ENCODE measurements at regions of chr21 and their contacts with region 1.

Region 1: GRCh38 chr21:33324291-33325221 is at the start of gene IFNAR1:
- DNase-seq: peak; percentile 98 to 100 (median 99)
- ATAC-seq: peak; percentile 87
- H3K4me3 ChIP-seq: peak within 1 kb of the TSS; percentile 90
- H3K4me3 Mint-ChIP-seq: no peak within 1 kb of the TSS
- H3K27ac ChIP-seq: peak within 1 kb of the TSS; percentile 95 to 99
- H3K27ac Mint-ChIP-seq: no peak within 1 kb of the TSS
- H3K4me1 ChIP-seq: peaks cover 29% of the 10 kb centered on the region
- H3K4me1 Mint-ChIP-seq: peaks cover 31% of the 10 kb centered on the region
- H3K27me3 ChIP-seq: no peaks in the 10 kb centered on the region
- H3K27me3 Mint-ChIP-seq: no peaks in the 10 kb centered on the region
- CTCF ChIP-seq: no peak
- total RNA-seq, gene IFNAR1: 20.4 to 26.8 TPM

Region 2: GRCh38 chr21:33185852-33186251 is 138.7 kb before region 1 on chr21:
- CTCF ChIA-PET with region 1: no interaction called
- POLR2A ChIA-PET with region 1: interaction called, 11 read pairs
- intact Hi-C with region 1: no loop called
- DNase-seq: peak in 6 of 14 experiments; percentile 17 to 83 (median 57)
- ATAC-seq: peak; percentile 94
- H3K4me3 ChIP-seq: no peak overlapping the region
- H3K4me3 Mint-ChIP-seq: peak overlapping the region; percentile 49
- H3K27ac ChIP-seq: peak overlapping the region; percentile 45 to 73
- H3K27ac Mint-ChIP-seq: peak overlapping the region; percentile 76
- H3K4me1 ChIP-seq: peaks cover 20% of the 10 kb centered on the region
- H3K4me1 Mint-ChIP-seq: peaks cover 68% of the 10 kb centered on the region
- H3K27me3 ChIP-seq: no peaks in the 10 kb centered on the region
- H3K27me3 Mint-ChIP-seq: no peaks in the 10 kb centered on the region
- CTCF ChIP-seq: no peak

Region 3: DNA sequence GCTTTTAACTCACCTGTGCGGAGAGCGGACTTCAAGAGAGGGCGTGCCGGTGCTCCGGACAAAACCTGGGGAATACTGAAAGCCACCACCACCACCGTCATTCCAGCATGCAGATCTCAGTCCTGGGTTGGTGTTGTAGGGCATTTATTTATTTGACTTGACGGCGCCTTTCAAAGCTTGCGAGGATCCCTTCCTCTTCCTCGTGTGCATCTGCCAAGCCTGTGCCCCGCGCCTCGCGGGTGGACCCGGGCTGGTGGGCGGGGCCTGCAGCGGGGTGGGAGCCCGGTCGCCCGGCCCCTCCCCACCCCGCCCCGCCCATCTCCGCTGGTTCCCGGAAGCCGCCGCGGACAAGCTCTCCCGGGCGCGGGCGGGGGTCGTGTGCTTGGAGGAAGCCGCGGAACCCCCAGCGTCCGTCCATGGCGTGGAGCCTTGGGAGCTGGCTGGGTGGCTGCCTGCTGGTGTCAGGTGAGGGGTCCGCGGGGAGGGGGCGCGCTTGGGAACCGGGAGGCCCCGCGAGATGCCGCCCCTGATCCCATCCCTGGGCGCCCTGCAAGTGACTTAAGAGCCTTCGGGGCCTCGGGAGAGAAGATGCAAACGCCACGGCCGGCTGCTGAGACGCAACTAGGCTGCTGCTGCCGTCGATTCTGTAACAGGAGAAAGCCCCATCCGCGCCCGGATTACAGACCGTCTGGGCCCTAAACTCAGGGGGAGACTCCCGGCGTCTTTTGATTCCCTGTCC is 58.3 kb before region 1 on chr21 and contains the start of gene IL10RB:
- CTCF ChIA-PET with region 1: interaction called, 3 read pairs
- POLR2A ChIA-PET with region 1: interaction called, 35 read pairs
- intact Hi-C with region 1: no loop called
- DNase-seq: peak; percentile 47 to 89 (median 72)
- ATAC-seq: peak; percentile 71
- H3K4me3 ChIP-seq: peak within 1 kb of the TSS; percentile 98
- H3K4me3 Mint-ChIP-seq: peak within 1 kb of the TSS; percentile 99
- H3K27ac ChIP-seq: peak within 1 kb of the TSS; percentile 79 to 85
- H3K27ac Mint-ChIP-seq: peak within 1 kb of the TSS; percentile 94
- H3K4me1 ChIP-seq: peaks cover 62% of the 10 kb centered on the region
- H3K4me1 Mint-ChIP-seq: peaks cover 60% of the 10 kb centered on the region
- H3K27me3 ChIP-seq: no peaks in the 10 kb centered on the region
- H3K27me3 Mint-ChIP-seq: no peaks in the 10 kb centered on the region
- CTCF ChIP-seq: no peak
- total RNA-seq, gene IL10RB: 7.2 to 9.2 TPM

Region 4: DNA sequence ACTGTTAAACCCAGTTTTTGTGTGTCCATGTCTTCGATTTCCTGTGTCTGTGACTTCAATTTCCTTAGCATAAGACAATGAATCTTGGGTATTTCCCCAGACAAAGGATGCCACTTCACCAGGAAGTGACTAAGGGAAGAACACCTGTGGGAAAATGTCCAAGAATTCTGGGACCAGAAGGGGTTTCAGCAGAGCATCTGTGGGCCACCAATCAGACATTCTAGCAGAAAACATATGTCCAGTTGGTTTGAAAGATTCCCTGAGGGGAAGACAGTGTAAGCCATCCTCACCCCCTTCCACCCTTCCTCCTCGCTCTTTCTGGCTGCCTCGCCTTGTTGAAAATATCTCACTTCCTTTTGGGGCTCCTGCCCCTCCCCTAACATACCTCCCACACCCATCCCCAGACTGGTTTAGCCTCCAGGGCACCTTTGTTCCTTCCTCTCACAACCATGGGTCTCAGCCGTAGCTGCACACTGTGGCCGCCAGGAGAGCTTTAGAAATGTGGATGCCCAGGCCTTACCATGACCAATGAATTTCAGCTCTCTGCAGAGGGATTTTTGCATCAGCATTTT is 25.3 kb before region 1 on chr21:
- CTCF ChIA-PET with region 1: no interaction called
- POLR2A ChIA-PET with region 1: interaction called, 35 read pairs
- intact Hi-C with region 1: no loop called
- DNase-seq: peak in 13 of 14 experiments; percentile 9 to 76 (median 36)
- ATAC-seq: peak; percentile 97
- H3K4me3 ChIP-seq: peak overlapping the region; percentile 6
- H3K4me3 Mint-ChIP-seq: peak overlapping the region; percentile 66
- H3K27ac ChIP-seq: peak overlapping the region; percentile 23 to 69
- H3K27ac Mint-ChIP-seq: peak overlapping the region; percentile 86
- H3K4me1 ChIP-seq: peaks cover 39% of the 10 kb centered on the region
- H3K4me1 Mint-ChIP-seq: peaks cover 53% of the 10 kb centered on the region
- H3K27me3 ChIP-seq: no peaks in the 10 kb centered on the region
- H3K27me3 Mint-ChIP-seq: no peaks in the 10 kb centered on the region
- CTCF ChIP-seq: no peak

Region 5: DNA sequence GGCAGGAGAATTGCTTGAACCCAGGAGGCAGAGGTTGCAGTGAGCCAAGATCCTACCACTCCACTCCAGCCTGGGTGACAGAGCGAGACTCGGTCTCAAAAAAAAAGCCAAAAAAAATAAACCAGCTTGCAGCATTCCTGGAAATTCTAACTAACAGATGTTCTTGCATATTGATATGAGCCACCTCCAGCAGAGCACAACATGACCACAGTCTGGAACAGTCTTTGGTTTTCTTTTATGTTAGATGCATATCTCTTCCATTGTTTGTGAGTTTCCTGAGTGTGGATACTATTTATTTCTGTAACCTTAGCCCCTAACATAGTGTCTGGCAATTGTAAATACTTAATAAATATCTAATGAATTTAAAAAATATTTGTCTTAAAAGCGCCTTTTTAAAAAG is 24.1 kb after region 1 on chr21:
- CTCF ChIA-PET with region 1: no interaction called
- POLR2A ChIA-PET with region 1: interaction called, 19 read pairs
- intact Hi-C with region 1: no loop called
- DNase-seq: no peak
- ATAC-seq: no peak
- H3K4me3 ChIP-seq: no peak overlapping the region
- H3K4me3 Mint-ChIP-seq: no peak overlapping the region
- H3K27ac ChIP-seq: no peak overlapping the region
- H3K27ac Mint-ChIP-seq: peak overlapping the region; percentile 84
- H3K4me1 ChIP-seq: no peaks in the 10 kb centered on the region
- H3K4me1 Mint-ChIP-seq: peaks cover 23% of the 10 kb centered on the region
- H3K27me3 ChIP-seq: no peaks in the 10 kb centered on the region
- H3K27me3 Mint-ChIP-seq: no peaks in the 10 kb centered on the region
- CTCF ChIP-seq: no peak

Region 6: GRCh38 chr21:33479679-33480480 is 155.3 kb after region 1 on chr21 and contains the start of gene TMEM50B:
- CTCF ChIA-PET with region 1: interaction called, 3 read pairs
- POLR2A ChIA-PET with region 1: interaction called, 31 read pairs
- intact Hi-C with region 1: loop called in 1 of 2 experiments (anchors 1 kb)
- DNase-seq: peak; percentile 91 to 99 (median 96)
- ATAC-seq: peak; percentile 89
- H3K4me3 ChIP-seq: peak within 1 kb of the TSS; percentile 88
- H3K4me3 Mint-ChIP-seq: peak within 1 kb of the TSS; percentile 89
- H3K27ac ChIP-seq: peak within 1 kb of the TSS; percentile 80 to 90
- H3K27ac Mint-ChIP-seq: peak within 1 kb of the TSS; percentile 96
- H3K4me1 ChIP-seq: peaks cover 22% of the 10 kb centered on the region
- H3K4me1 Mint-ChIP-seq: peaks cover 19% of the 10 kb centered on the region
- H3K27me3 ChIP-seq: no peaks in the 10 kb centered on the region
- H3K27me3 Mint-ChIP-seq: no peaks in the 10 kb centered on the region
- CTCF ChIP-seq: peak; percentile 0
- total RNA-seq, gene TMEM50B: 38.4 to 40.3 TPM

Region 7: GRCh38 chr21:34004974-34005373 is 680.4 kb after region 1 on chr21:
- CTCF ChIA-PET with region 1: no interaction called
- POLR2A ChIA-PET with region 1: no interaction called
- intact Hi-C with region 1: no loop called
- DNase-seq: no peak
- ATAC-seq: no peak
- H3K4me3 ChIP-seq: no peak overlapping the region
- H3K4me3 Mint-ChIP-seq: no peak overlapping the region
- H3K27ac ChIP-seq: no peak overlapping the region
- H3K27ac Mint-ChIP-seq: no peak overlapping the region
- H3K4me1 ChIP-seq: peaks cover 4% of the 10 kb centered on the region
- H3K4me1 Mint-ChIP-seq: no peaks in the 10 kb centered on the region
- H3K27me3 ChIP-seq: no peaks in the 10 kb centered on the region
- H3K27me3 Mint-ChIP-seq: no peaks in the 10 kb centered on the region
- CTCF ChIP-seq: no peak